Left ventricle myocardium inferior (tissue), 1 donor: ENCODE measurements at regions of chrX and their contacts with region 1.

Region 1: DNA sequence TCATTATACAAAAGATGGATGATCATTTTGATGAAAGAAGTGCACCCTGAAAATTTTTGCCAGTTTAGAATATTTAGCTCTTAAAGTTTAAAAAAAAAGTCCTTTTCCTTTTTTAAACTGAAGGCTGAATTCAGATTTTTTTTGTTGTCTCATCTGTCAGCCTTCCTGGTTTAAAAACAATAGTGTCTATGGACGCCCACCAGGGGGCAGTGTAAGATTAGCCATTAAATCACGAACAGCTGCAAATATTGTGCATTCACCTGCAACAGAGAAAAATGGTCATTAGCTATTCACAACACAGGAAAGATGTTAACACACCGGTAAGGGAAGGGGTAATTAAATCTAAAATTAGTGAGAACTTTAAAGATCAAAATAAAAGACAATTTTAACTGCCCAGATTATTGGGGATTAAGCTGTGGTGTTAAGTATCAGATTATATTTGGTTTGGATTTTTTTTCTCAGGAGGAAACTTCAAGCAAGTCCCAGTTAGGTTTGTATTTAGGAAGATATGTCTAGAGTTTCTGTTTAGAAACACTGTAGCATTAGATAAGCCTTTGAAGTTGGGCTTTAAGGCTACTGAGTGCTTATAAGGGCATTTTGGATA is 4.4 kb upstream of the CXorf38 start:
- DNase-seq: peak; percentile 18
- H3K4me3 ChIP-seq: no peak overlapping the region
- H3K27ac ChIP-seq: no peak overlapping the region
- H3K4me1 ChIP-seq: peaks cover 15% of the 10 kb centered on the region
- H3K27me3 ChIP-seq: no peaks in the 10 kb centered on the region
- CTCF ChIP-seq: peak; percentile 71

Region 2: GRCh38 chrX:40539214-40540142 is 112.2 kb before region 1 on chrX:
- intact Hi-C with region 1: loop called (anchors 10 kb)
- DNase-seq: peak; percentile 23
- H3K4me3 ChIP-seq: no peak overlapping the region
- H3K27ac ChIP-seq: peak overlapping the region; percentile 42
- H3K4me1 ChIP-seq: peaks cover 3% of the 10 kb centered on the region
- H3K27me3 ChIP-seq: no peaks in the 10 kb centered on the region
- CTCF ChIP-seq: no peak

Region 3: DNA sequence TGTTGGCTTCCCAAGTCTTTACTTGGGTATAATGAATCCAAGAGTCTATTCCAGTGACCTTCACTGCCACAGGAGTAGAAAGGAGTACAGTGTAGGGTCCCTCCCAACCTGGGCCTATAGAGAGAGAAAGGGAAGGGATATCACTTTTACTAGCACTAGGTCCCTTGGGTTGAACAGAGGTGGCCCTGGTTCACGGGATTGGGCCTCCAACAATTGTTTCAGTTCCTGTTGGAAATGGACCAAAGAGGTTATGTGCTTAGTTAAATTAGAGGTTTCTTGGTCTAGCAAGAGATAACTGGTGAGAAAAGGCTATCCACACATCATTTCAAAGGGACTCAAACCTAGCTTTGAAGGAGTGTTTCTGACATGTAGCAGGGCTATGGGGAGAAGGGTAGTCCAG is 140.7 kb after region 1 on chrX:
- intact Hi-C with region 1: loop called (anchors 10 kb)
- DNase-seq: no peak
- H3K4me3 ChIP-seq: no peak overlapping the region
- H3K27ac ChIP-seq: no peak overlapping the region
- H3K4me1 ChIP-seq: peaks cover 7% of the 10 kb centered on the region
- H3K27me3 ChIP-seq: no peaks in the 10 kb centered on the region
- CTCF ChIP-seq: no peak

Region 4: GRCh38 chrX:40887476-40887875 is 235.8 kb after region 1 on chrX:
- intact Hi-C with region 1: no loop called
- DNase-seq: no peak
- H3K4me3 ChIP-seq: no peak overlapping the region
- H3K27ac ChIP-seq: no peak overlapping the region
- H3K4me1 ChIP-seq: no peaks in the 10 kb centered on the region
- H3K27me3 ChIP-seq: no peaks in the 10 kb centered on the region
- CTCF ChIP-seq: no peak